A549 (cell line): ENCODE measurements at regions of chr7 and their contacts with region 1.

Region 1: GRCh38 chr7:151754142-151754590 is 122.7 kb downstream of the PRKAG2 start:
- DNase-seq: peak; percentile 97 to 98
- ATAC-seq: peak; percentile 96 to 98
- H3K4me3 ChIP-seq: no peak overlapping the region
- H3K27ac ChIP-seq: peak overlapping the region; percentile 91 to 96
- H3K4me1 ChIP-seq: peaks cover 41% of the 10 kb centered on the region
- CTCF ChIP-seq: peak; percentile 94
- EP300 ChIP-seq: peak; percentile 73 to 87; a peak in 3 of 5 replicates
- POLR2A ChIP-seq: no peak
- RAD21 ChIP-seq: peak; percentile 77 to 85

Region 2: DNA sequence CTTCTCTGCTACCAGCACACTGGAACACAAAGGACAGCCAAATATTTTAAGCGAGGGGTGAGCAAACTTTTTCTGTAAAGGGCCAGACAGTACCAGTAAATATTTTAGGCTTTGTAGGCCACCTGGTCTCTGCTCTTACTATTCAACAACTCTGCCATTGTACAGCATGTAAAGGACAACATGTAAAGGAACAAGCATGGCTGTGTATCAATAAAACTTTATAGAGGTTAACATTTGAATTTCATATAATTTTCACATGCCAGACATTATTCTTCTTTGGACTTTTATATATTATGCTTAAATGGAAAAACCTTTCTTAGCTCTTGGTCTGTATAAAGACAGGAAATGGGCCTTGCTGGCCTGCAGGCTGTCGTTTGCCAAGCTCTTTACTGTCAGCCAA is 264.7 kb before region 1 on chr7:
- CTCF ChIA-PET with region 1: no interaction called
- POLR2A ChIA-PET with region 1: no interaction called
- DNase-seq: no peak
- ATAC-seq: no peak
- H3K4me3 ChIP-seq: no peak overlapping the region
- H3K27ac ChIP-seq: no peak overlapping the region
- H3K4me1 ChIP-seq: peaks cover 62% of the 10 kb centered on the region
- CTCF ChIP-seq: no peak
- EP300 ChIP-seq: no peak
- POLR2A ChIP-seq: no peak
- RAD21 ChIP-seq: no peak

Region 3: GRCh38 chr7:151727579-151728285 is 26.4 kb before region 1 on chr7:
- CTCF ChIA-PET with region 1: interaction called, 18 read pairs
- POLR2A ChIA-PET with region 1: interaction called, 4 read pairs
- DNase-seq: peak; percentile 91 to 93
- ATAC-seq: peak; percentile 92 to 95
- H3K4me3 ChIP-seq: 0 out of 3 replicates have a peak overlapping the region, but pooled peaks have one; percentile 19
- H3K27ac ChIP-seq: peak overlapping the region; percentile 91 to 94
- H3K4me1 ChIP-seq: peaks cover 34% of the 10 kb centered on the region
- CTCF ChIP-seq: no peak
- EP300 ChIP-seq: peak; percentile 62 to 73; a peak in 3 of 5 replicates
- POLR2A ChIP-seq: no peak
- RAD21 ChIP-seq: peak in 1 of 2 experiments; percentile 55; a peak in 3 of 5 replicates

Region 4: GRCh38 chr7:151736403-151736909 is 17.7 kb before region 1 on chr7:
- CTCF ChIA-PET with region 1: interaction called, 24 read pairs
- POLR2A ChIA-PET with region 1: no interaction called
- DNase-seq: peak; percentile 84 to 98
- ATAC-seq: peak; percentile 93 to 94
- H3K4me3 ChIP-seq: peak overlapping the region; percentile 46
- H3K27ac ChIP-seq: peak overlapping the region; percentile 78 to 85
- H3K4me1 ChIP-seq: peaks cover 17% of the 10 kb centered on the region
- CTCF ChIP-seq: no peak
- EP300 ChIP-seq: no peak; a peak in 1 of 5 replicates
- POLR2A ChIP-seq: 0 out of 2 replicates have a peak, but pooled peaks have one; percentile 21
- RAD21 ChIP-seq: no peak; a peak in 1 of 5 replicates